Posterior vena cava (tissue), 2 donors: ENCODE measurements at regions of chr2 and their contacts with region 1.

Region 1: GRCh38 chr2:212686285-212686895 is 147.8 kb upstream of the ERBB4 start:
- DNase-seq: no peak

Region 2: GRCh38 chr2:213151437-213152064 is 465.2 kb after region 1 on chr2 and contains the start of gene IKZF2:
- intact Hi-C with region 1: loop called in 1 of 2 experiments (anchors 10 kb)
- DNase-seq: peak; percentile 95
- total RNA-seq, gene IKZF2: 7.3 to 8.8 TPM